ENCODE measurements at regions of chr13 and their contacts with region 1.

Region 1: GRCh38 chr13:51070005-51070649 is 40.9 kb downstream of the C13orf42 start:
- DNase-seq: peak; percentile 88
- H3K4me3 ChIP-seq: no peak overlapping the region
- H3K27ac ChIP-seq: no peak overlapping the region
- H3K4me1 ChIP-seq: peaks cover 5% of the 10 kb centered on the region
- CTCF ChIP-seq: peak; percentile 98

Region 2: DNA sequence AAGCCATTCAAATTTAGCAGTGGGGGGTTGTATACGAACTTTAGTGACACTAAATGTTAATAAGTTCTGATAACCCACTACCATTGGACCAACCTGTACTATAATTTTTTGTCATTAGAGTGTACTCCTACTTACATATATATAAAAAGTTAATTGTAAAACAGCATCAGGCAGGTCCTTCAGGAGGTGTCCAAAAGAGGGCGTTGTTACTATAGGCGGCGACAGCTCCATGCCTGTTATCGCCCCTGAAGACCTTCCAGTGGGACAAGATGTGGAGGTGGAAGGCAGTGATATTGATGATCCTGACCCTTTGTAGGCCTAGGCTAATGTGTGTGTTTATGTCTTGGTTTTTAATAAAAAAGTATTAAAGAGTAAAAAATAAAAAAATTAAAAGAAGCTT is 1161.5 kb before region 1 on chr13:
- CTCF ChIA-PET with region 1: no interaction called
- POLR2A ChIA-PET with region 1: no interaction called
- intact Hi-C with region 1: loop called (anchors 10 kb)
- DNase-seq: peak; percentile 23
- H3K4me3 ChIP-seq: no peak overlapping the region
- H3K27ac ChIP-seq: no peak overlapping the region
- H3K4me1 ChIP-seq: no peaks in the 10 kb centered on the region
- CTCF ChIP-seq: peak; percentile 68

Region 3: DNA sequence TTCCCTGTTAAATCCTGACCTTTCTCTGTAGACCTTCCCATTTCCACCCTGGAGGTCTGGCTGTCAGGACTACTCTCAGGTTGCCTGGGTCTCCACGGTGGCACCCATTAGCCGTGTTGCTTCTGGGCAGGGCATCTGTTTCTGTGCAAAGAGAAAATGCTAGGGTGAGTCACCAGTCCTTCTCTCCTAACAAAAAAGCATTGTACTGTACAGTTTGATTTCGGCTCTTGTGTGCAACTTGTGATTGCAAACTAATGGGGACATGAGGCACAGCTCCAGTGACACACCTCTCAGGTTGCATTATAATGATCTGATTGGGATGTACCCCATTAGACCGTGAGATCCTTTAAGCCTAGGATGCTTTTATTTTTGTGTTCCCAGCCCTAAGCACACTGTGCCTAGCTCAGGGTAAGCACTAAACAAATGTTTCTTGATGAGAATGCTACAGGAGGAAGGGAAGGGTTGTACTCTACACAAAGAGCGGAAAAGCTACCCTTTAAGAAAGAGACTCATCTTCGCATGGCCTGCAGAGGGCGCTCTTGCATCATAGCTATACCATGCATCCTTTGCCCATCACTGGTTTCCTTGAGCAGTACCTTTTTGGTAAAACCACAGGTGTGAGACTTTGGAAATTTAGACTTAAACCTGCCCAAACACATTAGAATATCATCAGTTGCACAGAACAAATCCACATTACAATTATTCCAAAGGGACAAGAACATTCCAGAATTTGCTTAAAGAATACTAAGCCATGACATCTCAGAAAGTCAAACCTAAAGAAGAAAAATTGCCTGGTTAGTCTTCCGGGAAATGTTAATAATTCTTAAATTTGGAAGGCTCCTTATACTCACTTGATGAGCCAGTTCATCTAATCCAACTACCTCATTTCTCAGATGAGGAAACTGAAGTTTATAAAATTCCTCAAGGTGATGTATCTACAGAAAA is 1093.5 kb before region 1 on chr13:
- CTCF ChIA-PET with region 1: interaction called, 3 read pairs
- POLR2A ChIA-PET with region 1: interaction called, 3 read pairs
- intact Hi-C with region 1: loop called (anchors 1 kb)
- DNase-seq: peak; percentile 87
- H3K4me3 ChIP-seq: no peak overlapping the region
- H3K27ac ChIP-seq: no peak overlapping the region
- H3K4me1 ChIP-seq: peaks cover 8% of the 10 kb centered on the region
- CTCF ChIP-seq: peak; percentile 99

Measured in OCI-LY7 (cell line).